ENCODE measurements at regions of chr10 and their contacts with region 1.

Region 1: GRCh38 chr10:84244651-84245270 is at the start of gene RGR:
- DNase-seq: no peak
- H3K4me3 Mint-ChIP-seq: no peak within 1 kb of the TSS
- H3K27ac Mint-ChIP-seq: no peak within 1 kb of the TSS
- H3K4me1 Mint-ChIP-seq: no peaks in the 10 kb centered on the region
- H3K27me3 Mint-ChIP-seq: peaks cover 2% of the 10 kb centered on the region
- total RNA-seq, gene RGR: not detected

Region 2: GRCh38 chr10:84172467-84173356 is 72.0 kb before region 1 on chr10:
- CTCF ChIA-PET with region 1: no interaction called
- POLR2A ChIA-PET with region 1: no interaction called
- DNase-seq: no peak
- H3K4me3 Mint-ChIP-seq: no peak overlapping the region
- H3K27ac Mint-ChIP-seq: no peak overlapping the region
- H3K4me1 Mint-ChIP-seq: no peaks in the 10 kb centered on the region
- H3K27me3 Mint-ChIP-seq: no peaks in the 10 kb centered on the region

Region 3: DNA sequence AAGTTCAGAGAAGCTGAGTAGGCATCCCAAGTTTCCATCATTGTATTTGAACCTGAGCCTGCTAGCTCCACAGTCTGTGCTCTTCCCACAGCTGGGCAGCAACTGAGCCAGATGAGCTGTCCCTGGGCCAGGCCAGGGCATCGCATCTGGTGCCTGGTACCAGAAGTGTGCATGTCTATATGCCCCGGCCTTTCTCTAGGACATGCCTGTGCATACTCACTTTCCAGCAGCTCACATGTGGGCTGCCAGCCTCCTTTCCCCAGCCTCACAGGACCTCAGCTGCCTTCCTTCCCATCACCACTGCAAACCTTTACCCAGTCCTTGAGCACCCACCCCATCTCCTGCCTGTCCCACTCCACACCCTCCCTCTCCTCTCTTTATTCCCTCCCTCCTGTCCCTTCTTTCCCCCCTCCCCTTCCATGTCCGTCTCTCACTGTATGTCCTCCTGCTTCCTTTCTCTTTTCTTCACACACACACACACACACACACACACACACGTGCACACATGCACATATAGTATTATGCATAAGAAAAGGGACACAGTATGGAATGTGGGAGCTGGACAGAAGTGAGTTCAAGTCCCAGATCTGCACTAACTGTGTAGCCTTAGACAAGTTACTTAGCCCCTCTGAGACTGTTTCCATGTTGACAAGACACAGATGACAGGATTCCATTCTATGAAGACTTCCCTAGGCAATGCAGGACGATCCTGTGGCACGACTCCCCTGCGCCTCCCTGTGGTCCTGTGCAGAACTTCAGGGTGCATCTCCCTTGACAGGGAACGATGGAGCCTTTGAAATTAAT is 39.5 kb before region 1 on chr10:
- CTCF ChIA-PET with region 1: no interaction called
- POLR2A ChIA-PET with region 1: no interaction called
- DNase-seq: peak; percentile 73
- H3K4me3 Mint-ChIP-seq: no peak overlapping the region
- H3K27ac Mint-ChIP-seq: no peak overlapping the region
- H3K4me1 Mint-ChIP-seq: peaks cover 2% of the 10 kb centered on the region
- H3K27me3 Mint-ChIP-seq: peaks cover 7% of the 10 kb centered on the region

Region 4: DNA sequence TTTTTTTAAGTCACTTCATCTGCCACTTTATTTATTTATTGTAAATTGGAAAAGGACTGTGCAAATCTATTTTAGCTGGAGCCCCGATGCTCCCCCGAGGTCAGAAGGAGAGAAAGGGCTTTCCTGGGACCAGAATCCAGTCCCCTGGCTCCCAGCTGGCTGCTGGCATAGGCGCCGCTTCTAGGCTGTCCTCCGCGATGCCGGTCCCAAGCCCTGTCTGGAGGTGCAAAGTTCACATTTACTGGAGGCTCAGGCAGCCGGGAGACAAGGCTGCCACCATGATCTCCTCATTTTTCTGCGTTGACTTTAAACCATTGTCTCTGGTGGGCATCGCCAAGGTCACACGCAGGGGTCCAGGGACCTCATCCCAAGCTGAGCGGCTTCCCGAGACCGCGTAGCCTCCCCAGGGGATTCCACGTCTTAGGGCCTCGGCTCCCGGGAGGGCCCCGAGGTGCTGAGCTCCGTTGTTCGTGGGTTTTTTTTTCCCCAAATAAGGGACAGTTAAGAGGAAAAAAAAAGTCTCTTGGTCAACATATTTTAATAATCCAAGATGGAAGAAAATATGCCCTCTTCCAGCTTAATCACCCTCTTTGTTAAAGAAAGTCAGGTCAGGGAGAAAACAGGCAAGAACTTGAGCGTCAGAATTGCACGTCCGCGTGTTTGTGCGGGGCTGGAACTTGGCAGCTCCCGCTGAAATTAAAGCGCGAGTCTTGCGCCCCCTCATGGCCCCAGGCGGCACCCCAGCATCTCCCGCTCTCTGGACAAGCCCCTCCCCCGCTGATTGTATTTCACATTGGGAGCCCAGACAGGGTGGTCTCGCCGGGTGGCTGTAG is 12.0 kb after region 1 on chr10:
- CTCF ChIA-PET with region 1: interaction called, 15 read pairs
- POLR2A ChIA-PET with region 1: no interaction called
- DNase-seq: peak; percentile 41
- H3K4me3 Mint-ChIP-seq: no peak overlapping the region
- H3K27ac Mint-ChIP-seq: no peak overlapping the region
- H3K4me1 Mint-ChIP-seq: no peaks in the 10 kb centered on the region
- H3K27me3 Mint-ChIP-seq: peaks cover 11% of the 10 kb centered on the region